ENCODE measurements at regions of chr16 and their contacts with region 1.

Region 1: DNA sequence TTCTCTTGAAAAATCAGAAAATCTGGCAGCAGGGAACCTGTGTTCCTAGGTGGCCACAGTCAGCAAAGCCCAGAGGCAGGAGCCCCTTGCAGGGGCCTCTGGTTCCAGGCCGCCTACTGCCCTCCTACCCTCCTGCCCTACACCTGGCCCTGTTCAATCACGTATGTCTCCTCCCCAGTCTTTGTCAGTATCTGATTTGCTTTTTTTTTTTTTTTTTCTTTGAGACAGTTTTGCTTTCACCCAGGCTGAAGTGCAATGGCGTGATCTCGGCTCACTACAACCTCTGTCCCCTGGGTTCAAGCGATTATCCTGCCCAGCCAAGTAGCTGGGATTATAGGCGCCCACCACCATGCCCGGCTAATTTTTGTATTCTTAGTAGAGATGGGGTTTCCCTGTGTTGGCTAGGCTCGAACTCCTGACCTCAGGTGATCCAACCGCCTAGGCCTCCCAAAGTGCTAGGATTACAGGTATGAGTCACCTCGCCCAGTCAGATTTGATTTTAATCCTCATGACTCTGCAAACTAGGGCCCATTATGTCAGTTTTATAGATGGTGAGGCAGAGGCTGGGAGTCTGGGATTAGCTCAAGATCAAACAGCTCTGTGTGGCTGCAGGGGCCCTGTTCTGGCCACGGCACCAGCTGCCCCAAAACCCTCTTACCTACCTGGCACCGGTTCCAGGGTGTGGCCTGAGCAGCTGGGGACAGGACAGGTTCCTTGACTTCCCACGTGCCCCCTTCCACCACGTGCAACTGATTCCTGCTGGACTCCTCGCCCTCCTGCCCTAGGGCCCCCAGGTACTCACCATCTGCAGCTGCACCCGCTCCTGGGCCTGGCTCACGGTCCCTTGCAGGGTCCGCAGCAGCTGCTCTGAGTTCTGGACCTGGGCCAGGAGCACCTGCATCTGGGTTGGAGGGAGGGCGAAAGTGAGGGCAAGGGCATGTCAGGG is 14.7 kb downstream of the RABEP2 start:
- DNase-seq: no peak
- H3K4me3 ChIP-seq: no peak overlapping the region
- CTCF ChIP-seq: no peak
- POLR2A ChIP-seq: no peak

Region 2: DNA sequence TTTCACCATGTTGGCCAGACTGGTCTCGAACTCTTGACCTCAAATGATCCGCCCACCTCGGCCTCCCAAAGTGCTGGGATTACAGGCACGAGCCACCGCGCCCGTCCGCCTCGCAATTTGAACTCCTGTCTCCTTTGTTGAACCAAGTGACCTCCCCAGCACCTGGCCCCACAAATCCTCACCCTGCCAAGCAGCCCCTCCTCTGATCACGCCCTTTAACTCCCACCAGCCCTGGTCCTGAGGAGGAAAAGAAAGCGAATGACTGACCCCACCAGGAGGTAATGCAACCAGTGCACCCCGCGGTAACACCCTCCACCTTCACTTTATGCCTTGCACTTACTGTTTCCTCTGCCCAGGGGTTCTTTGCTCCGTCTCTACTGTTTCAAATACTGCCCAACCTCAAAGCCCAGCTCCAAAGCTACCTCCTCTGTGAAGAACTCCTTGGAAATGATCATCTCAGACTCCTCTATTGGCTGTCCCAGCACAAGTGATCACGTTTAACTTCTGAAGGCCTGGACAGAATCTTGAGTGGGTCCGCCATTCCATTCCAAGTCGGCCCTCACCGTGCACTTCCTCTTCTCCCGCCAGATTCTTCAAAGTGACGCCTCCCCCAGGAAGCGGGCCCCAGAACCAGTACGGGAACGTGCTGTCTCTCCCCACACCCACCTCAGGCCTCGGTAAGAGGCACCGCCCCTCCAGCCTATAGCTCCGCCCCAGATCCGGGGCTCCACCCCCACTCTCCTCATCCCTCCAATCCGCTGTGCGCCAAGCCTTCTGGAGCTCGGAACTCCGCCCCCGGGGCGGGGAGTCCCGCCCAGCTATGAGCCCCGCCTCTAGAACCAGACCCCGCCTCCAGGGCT is 25.8 kb after region 1 on chr16:
- intact Hi-C with region 1: loop called (anchors 2 kb)
- DNase-seq: peak; percentile 65 to 93
- H3K4me3 ChIP-seq: no peak overlapping the region
- CTCF ChIP-seq: no peak
- POLR2A ChIP-seq: no peak

Region 3: DNA sequence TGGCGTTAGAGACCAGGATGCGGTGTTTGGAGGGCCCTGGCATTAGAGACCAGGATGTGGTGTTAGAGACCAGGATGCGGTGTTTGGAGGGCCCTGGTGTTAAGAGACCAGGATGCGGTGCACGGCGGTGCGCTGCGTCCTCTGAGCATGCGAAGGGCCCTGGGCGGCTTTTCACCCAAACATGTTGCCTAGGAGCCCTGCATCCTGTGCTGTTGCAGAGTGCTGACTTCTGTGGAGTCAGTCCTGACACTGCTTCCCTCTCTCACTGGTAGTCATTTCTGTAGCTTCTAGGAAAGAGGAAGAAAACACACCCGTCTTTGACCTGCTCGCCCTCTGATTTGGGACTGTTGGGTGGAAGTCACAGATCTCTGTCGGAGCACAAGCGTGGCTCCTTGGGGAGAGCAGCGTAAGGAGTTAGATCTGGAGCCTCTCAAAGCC is 215.7 kb after region 1 on chr16:
- intact Hi-C with region 1: no loop called
- DNase-seq: peak in 1 of 2 donors; percentile 60
- H3K4me3 ChIP-seq: no peak overlapping the region
- CTCF ChIP-seq: no peak
- POLR2A ChIP-seq: no peak

Measured in lower leg skin (tissue), 4 donors.